Dendritic cell treated with granulocyte-macrophage colony-stimulating factor and Interleukin-4, amounts not matched to agents 40 ng/mL and 50 ng/mL, for 4 days (primary cell): ENCODE measurements at regions of chr20 and their contacts with region 1.

Region 1: DNA sequence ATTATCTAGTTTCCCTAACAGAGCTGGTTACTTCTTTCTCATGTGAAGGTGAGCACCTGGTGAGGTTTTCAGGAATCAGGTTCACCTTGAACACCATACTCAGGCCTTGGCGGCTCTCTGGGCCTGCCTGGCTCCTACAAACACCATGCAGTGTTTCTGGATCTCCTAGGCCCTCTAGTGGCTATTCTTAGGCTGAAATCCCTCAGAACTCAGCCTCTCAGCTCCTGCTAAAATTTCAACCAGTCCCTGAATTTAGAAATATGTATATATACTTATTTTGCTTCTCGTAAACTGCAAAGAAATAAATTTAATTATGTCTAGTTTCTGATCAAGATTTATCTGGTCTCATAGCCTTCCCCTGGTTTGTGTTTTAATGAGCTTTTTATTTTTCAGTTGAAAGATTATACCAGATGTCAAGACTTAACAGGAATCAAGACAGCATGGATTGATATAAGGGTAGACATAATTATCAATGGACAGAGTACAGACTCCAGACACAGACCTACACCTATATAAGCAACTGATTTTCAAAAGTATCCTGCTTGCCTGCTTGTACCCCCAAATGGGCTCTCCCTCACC is 55.9 kb downstream of the ANKEF1 start:
- H3K4me3 Mint-ChIP-seq: no peak overlapping the region
- H3K27ac Mint-ChIP-seq: no peak overlapping the region
- H3K4me1 Mint-ChIP-seq: peaks cover 18% of the 10 kb centered on the region
- H3K27me3 Mint-ChIP-seq: peaks cover 5% of the 10 kb centered on the region

Region 2: DNA sequence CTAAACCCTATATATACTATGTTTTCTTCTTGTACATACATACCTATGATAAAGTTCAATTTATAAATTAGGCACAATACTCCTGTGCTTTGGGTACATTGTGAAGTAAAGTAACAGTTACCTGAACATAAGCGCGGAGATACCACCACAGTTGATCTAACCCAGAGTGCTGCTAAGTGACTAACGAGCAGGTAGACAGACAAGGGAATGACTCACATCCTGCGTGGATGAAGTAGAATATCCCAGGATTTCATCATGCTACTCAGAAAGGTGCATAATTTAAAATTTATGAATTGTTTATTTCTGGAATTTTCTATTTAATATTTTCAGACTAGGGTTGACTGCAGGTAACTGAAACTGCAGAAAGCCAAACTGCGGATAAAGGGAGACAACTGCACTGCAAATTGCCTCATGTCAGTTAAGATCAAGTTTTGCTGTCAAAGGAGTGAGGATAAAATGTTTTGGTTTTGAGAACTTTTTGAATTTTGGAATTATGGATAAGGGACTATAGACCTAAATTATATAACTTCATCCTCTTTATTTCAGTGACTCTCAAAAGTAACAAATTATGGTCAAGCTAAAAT is 329.0 kb after region 1 on chr20:
- intact Hi-C with region 1: loop called (anchors 5 kb)
- H3K4me3 Mint-ChIP-seq: no peak overlapping the region
- H3K27ac Mint-ChIP-seq: no peak overlapping the region
- H3K4me1 Mint-ChIP-seq: peaks cover 20% of the 10 kb centered on the region
- H3K27me3 Mint-ChIP-seq: no peaks in the 10 kb centered on the region

Region 3: GRCh38 chr20:11027239-11027638 is 936.6 kb after region 1 on chr20:
- intact Hi-C with region 1: no loop called
- H3K4me3 Mint-ChIP-seq: no peak overlapping the region
- H3K27ac Mint-ChIP-seq: no peak overlapping the region
- H3K4me1 Mint-ChIP-seq: no peaks in the 10 kb centered on the region
- H3K27me3 Mint-ChIP-seq: peaks cover 2% of the 10 kb centered on the region

Region 4: GRCh38 chr20:11274141-11274594 is 1183.5 kb after region 1 on chr20:
- intact Hi-C with region 1: loop called (anchors 10 kb)
- H3K4me3 Mint-ChIP-seq: no peak overlapping the region
- H3K27ac Mint-ChIP-seq: no peak overlapping the region
- H3K4me1 Mint-ChIP-seq: peaks cover 10% of the 10 kb centered on the region
- H3K27me3 Mint-ChIP-seq: peaks cover 1% of the 10 kb centered on the region

Region 5: GRCh38 chr20:11544029-11544678 is 1453.5 kb after region 1 on chr20:
- intact Hi-C with region 1: loop called (anchors 10 kb)
- H3K4me3 Mint-ChIP-seq: no peak overlapping the region
- H3K27ac Mint-ChIP-seq: no peak overlapping the region
- H3K4me1 Mint-ChIP-seq: no peaks in the 10 kb centered on the region
- H3K27me3 Mint-ChIP-seq: no peaks in the 10 kb centered on the region